Activated CD8-positive, alpha-beta T cell treated with anti-CD3 and anti-CD28 coated beads for 36 hours (primary cell): ENCODE measurements at regions of chr1 and their contacts with region 1.

Region 1: GRCh38 chr1:228500901-228501871 is 14.0 kb downstream of the RNF187 start:
- DNase-seq: peak; percentile 98
- ATAC-seq: peak; percentile 97
- H3K4me3 Mint-ChIP-seq: peak overlapping the region; percentile 60
- H3K27ac Mint-ChIP-seq: peak overlapping the region; percentile 66
- H3K4me1 Mint-ChIP-seq: peaks cover 24% of the 10 kb centered on the region
- H3K27me3 Mint-ChIP-seq: peaks cover 2% of the 10 kb centered on the region
- CTCF ChIP-seq: peak; percentile 87

Region 2: GRCh38 chr1:228391337-228392020 is 109.7 kb before region 1 on chr1:
- CTCF ChIA-PET with region 1: no interaction called
- POLR2A ChIA-PET with region 1: no interaction called
- intact Hi-C with region 1: no loop called
- DNase-seq: no peak
- ATAC-seq: no peak
- H3K4me3 Mint-ChIP-seq: no peak overlapping the region
- H3K27ac Mint-ChIP-seq: no peak overlapping the region
- H3K4me1 Mint-ChIP-seq: no peaks in the 10 kb centered on the region
- H3K27me3 Mint-ChIP-seq: no peaks in the 10 kb centered on the region
- CTCF ChIP-seq: no peak

Region 3: DNA sequence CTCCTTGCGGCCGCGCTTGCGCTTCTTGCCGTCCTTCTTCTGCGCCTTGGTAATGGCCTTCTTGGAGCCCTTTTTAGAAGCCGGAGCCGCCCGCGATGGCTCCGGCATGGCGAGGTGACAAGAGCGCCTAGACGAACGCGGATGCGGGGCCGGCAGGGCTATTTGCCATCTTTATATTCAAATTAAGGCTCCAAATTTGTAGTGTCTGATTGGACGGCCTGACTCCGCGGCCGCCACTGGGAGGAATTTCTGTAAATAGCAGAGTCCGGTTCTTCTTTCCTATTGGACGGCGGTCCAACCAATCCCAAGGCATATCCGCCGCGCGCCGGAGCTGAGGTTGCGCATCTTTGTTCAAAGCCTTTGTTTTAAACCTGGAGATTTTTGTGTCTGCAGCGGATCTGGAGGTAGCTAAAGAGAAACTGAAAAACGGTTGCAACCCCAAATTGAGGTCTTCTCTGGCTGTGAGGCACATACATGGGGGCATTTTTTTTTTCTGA is 36.7 kb before region 1 on chr1:
- CTCF ChIA-PET with region 1: interaction called, 14 read pairs
- POLR2A ChIA-PET with region 1: interaction called, 10 read pairs
- intact Hi-C with region 1: loop called (anchors 5 kb)
- DNase-seq: peak; percentile 96
- ATAC-seq: peak; percentile 83
- H3K4me3 Mint-ChIP-seq: peak overlapping the region; percentile 89
- H3K27ac Mint-ChIP-seq: peak overlapping the region; percentile 91
- H3K4me1 Mint-ChIP-seq: peaks cover 37% of the 10 kb centered on the region
- H3K27me3 Mint-ChIP-seq: peaks cover 7% of the 10 kb centered on the region
- CTCF ChIP-seq: no peak

Region 4: DNA sequence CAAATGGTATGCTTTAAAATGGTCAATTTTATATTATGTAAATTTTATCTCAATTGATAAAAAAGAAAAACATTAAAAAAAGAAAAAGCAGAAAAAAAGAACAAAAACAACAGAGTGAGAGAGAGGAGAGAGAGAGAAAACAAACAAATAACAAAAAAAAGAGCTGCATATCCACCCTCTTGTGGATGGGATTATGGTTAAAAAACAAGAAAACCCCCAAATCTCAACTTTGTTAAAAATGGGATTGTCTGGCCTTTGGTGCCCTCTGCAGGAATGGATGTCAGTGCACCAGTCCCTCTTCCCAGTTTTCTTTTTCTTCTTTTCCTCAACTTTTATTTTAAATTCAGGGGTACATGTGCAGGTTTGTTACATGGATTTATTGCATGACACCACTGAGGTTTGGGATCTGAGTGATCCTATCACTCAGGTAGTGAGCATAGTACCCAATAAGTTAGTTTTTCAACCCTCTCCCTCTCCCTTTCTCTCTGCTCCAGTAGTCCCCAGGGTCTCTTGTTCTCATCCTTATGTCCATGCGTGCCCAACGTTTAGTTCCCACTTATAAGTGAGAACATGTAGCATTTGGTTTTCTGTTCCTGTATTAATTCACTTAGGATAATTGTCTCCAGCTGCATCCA is 14.1 kb after region 1 on chr1:
- CTCF ChIA-PET with region 1: interaction called, 26 read pairs
- POLR2A ChIA-PET with region 1: interaction called, 8 read pairs
- intact Hi-C with region 1: no loop called
- DNase-seq: peak; percentile 52
- ATAC-seq: peak; percentile 51
- H3K4me3 Mint-ChIP-seq: no peak overlapping the region
- H3K27ac Mint-ChIP-seq: no peak overlapping the region
- H3K4me1 Mint-ChIP-seq: peaks cover 6% of the 10 kb centered on the region
- H3K27me3 Mint-ChIP-seq: peaks cover 12% of the 10 kb centered on the region
- CTCF ChIP-seq: peak; percentile 83

Region 5: GRCh38 chr1:228527596-228527995 is 26.4 kb after region 1 on chr1:
- CTCF ChIA-PET with region 1: no interaction called
- POLR2A ChIA-PET with region 1: no interaction called
- intact Hi-C with region 1: no loop called
- DNase-seq: no peak
- ATAC-seq: no peak
- H3K4me3 Mint-ChIP-seq: no peak overlapping the region
- H3K27ac Mint-ChIP-seq: no peak overlapping the region
- H3K4me1 Mint-ChIP-seq: no peaks in the 10 kb centered on the region
- H3K27me3 Mint-ChIP-seq: peaks cover 24% of the 10 kb centered on the region
- CTCF ChIP-seq: no peak

Region 6: GRCh38 chr1:228555074-228555989 is 54.1 kb after region 1 on chr1:
- CTCF ChIA-PET with region 1: no interaction called
- POLR2A ChIA-PET with region 1: no interaction called
- intact Hi-C with region 1: no loop called
- DNase-seq: peak; percentile 11
- ATAC-seq: no peak
- H3K4me3 Mint-ChIP-seq: no peak overlapping the region
- H3K27ac Mint-ChIP-seq: no peak overlapping the region
- H3K4me1 Mint-ChIP-seq: no peaks in the 10 kb centered on the region
- H3K27me3 Mint-ChIP-seq: peaks cover 1% of the 10 kb centered on the region
- CTCF ChIP-seq: no peak

Region 7: GRCh38 chr1:228891272-228892034 is 390.3 kb after region 1 on chr1:
- CTCF ChIA-PET with region 1: no interaction called
- POLR2A ChIA-PET with region 1: no interaction called
- intact Hi-C with region 1: no loop called
- DNase-seq: no peak
- ATAC-seq: no peak
- H3K4me3 Mint-ChIP-seq: no peak overlapping the region
- H3K27ac Mint-ChIP-seq: no peak overlapping the region
- H3K4me1 Mint-ChIP-seq: peaks cover 21% of the 10 kb centered on the region
- H3K27me3 Mint-ChIP-seq: no peaks in the 10 kb centered on the region
- CTCF ChIP-seq: no peak